Naive thymus-derived CD4-positive, alpha-beta T cell (primary cell): ENCODE measurements at regions of chr16 and their contacts with region 1.

Region 1: DNA sequence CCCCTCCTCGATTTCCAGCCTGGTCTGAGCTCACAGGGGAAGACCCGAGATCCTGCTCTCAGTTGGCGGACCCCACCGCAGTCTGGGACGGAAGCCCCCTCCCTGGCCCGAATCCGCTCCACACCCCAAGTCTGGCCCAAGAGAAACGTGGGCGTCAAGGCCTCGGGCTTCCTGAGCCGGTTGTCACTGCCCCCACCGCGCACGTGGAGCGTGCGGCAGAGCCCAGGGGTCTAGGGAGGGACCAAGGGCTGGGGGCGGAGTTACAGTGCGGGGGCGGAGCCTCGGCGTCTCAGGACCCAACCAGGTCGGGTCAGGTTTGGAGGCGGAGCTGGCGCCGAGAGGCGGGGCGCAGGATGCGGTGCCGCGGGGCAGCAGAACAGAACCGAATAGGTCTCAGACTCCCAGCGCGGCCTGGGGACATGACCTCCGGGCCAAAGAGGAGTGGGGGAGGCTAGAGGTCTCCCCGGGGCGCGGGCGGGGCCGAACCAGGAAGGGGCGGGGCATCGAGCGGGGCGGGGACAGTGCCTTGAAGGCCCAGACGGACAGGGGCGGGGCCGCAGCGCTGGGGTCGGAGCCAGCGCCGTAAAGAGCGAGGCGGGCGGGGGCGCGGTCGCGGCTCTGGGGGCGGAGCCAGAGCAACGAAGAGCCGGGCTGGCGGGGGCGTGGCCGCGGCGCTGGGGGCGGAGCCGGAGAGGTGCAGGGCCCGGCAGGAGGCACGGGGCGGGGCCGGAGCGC is 431 bp upstream of the ZFPM1 start:
- DNase-seq: peak; percentile 95 to 100 (median 98)
- ATAC-seq: peak; percentile 90
- H3K4me3 ChIP-seq: peak overlapping the region; percentile 61
- H3K4me3 Mint-ChIP-seq: peak overlapping the region; percentile 81 to 94 (median 84)
- H3K27ac ChIP-seq: peak overlapping the region; percentile 80
- H3K27ac Mint-ChIP-seq: peak overlapping the region; percentile 67 to 95 (median 87)
- H3K4me1 ChIP-seq: peaks cover 20 to 28% of the 10 kb centered on the region in 2 donors
- H3K4me1 Mint-ChIP-seq: peaks cover 19 to 29% (median 26%) of the 10 kb centered on the region in 7 donors
- H3K27me3 ChIP-seq: no peaks in the 10 kb centered on the region
- H3K27me3 Mint-ChIP-seq: peaks cover 0 to 9% (median 0%) of the 10 kb centered on the region in 5 donors

Region 2: GRCh38 chr16:87387942-87388817 is 1064.5 kb before region 1 on chr16:
- CTCF ChIA-PET with region 1: no interaction called
- POLR2A ChIA-PET with region 1: no interaction called
- intact Hi-C with region 1: loop called (anchors 5 to 10 kb)
- DNase-seq: peak; percentile 46 to 95 (median 88)
- ATAC-seq: peak; percentile 75
- H3K4me3 ChIP-seq: peak overlapping the region; percentile 27
- H3K4me3 Mint-ChIP-seq: peak overlapping the region; percentile 27 to 78 (median 68)
- H3K27ac ChIP-seq: peak overlapping the region; percentile 86
- H3K27ac Mint-ChIP-seq: peak overlapping the region; percentile 87 to 99 (median 96)
- H3K4me1 ChIP-seq: peaks cover 17 to 29% of the 10 kb centered on the region in 2 donors
- H3K4me1 Mint-ChIP-seq: peaks cover 15 to 55% (median 44%) of the 10 kb centered on the region in 7 donors
- H3K27me3 ChIP-seq: no peaks in the 10 kb centered on the region
- H3K27me3 Mint-ChIP-seq: peaks cover 0 to 2% (median 0%) of the 10 kb centered on the region in 5 donors

Region 3: DNA sequence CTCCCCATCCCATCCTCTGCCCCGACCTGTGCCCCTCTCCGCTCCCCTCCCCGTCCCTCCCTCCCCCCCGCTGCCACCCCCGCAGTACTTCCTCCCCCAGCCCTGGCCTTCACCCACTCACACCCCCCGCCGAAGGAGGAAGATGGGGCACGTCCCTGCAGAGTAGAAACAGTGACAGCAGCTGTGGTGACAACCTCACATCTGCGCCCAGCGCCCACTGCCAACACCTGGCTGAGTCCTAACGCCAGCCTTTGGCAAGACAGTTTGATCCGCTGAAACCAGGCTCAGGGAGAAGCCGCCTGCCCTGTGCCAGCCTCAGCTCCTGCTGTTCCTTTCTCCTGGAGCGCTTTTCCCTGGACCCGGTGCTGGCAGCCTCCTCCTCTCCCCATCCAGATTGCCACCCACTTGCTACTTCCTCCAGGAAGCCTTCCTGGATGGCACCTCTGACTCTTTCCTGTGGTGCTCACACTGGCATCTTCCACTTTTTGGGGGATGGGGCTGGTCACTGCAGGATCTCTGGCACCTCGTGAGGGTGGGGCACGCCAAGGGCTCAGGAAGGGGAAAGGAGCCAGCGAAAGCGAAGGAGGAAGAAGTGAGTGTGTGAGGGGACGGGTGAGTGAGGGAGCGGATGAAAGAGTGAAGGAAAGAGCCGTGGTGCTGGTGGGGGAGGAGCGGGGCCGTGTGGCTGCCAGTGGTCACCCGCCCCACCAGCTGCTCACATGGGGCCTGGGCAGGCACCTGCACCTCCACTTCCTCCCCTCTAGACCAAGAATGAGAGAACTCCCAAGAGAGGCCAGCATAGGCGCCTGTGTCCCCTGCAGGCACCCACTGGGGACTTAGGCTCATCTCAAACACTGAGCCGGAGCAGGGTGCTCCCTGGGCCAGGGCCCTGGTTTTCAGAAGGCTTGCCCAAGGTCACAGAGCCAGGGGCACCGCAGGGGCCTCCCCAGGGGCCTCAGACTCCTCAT is 27.4 kb after region 1 on chr16:
- CTCF ChIA-PET with region 1: no interaction called
- POLR2A ChIA-PET with region 1: interaction called, 6 read pairs
- intact Hi-C with region 1: loop called in 1 of 2 experiments (anchors 1 kb)
- DNase-seq: peak in 6 of 9 donors; percentile 35 to 57 (median 51)
- ATAC-seq: peak; percentile 49
- H3K4me3 ChIP-seq: peak overlapping the region; percentile 17
- H3K4me3 Mint-ChIP-seq: peak overlapping the region in 9 of 10 donors; percentile 40 to 77 (median 66)
- H3K27ac ChIP-seq: no peak overlapping the region
- H3K27ac Mint-ChIP-seq: peak overlapping the region in 6 of 9 donors; percentile 28 to 95 (median 74)
- H3K4me1 ChIP-seq: peaks cover 26 to 40% of the 10 kb centered on the region in 2 donors
- H3K4me1 Mint-ChIP-seq: peaks cover 22 to 59% (median 43%) of the 10 kb centered on the region in 7 donors
- H3K27me3 ChIP-seq: no peaks in the 10 kb centered on the region
- H3K27me3 Mint-ChIP-seq: peaks cover 0 to 6% (median 0%) of the 10 kb centered on the region in 5 donors

Region 4: GRCh38 chr16:88569985-88570690 is 117.5 kb after region 1 on chr16 and contains the start of gene ZC3H18:
- CTCF ChIA-PET with region 1: interaction called, 5 read pairs
- POLR2A ChIA-PET with region 1: interaction called, 5 read pairs
- intact Hi-C with region 1: loop called (anchors 1 kb)
- DNase-seq: peak; percentile 93 to 99 (median 96)
- ATAC-seq: peak; percentile 99
- H3K4me3 ChIP-seq: peak within 1 kb of the TSS; percentile 84
- H3K4me3 Mint-ChIP-seq: peak within 1 kb of the TSS; percentile 81 to 93 (median 87)
- H3K27ac ChIP-seq: peak within 1 kb of the TSS; percentile 91
- H3K27ac Mint-ChIP-seq: peak within 1 kb of the TSS; percentile 45 to 93 (median 89)
- H3K4me1 ChIP-seq: peaks cover 21% of the 10 kb centered on the region in 2 donors
- H3K4me1 Mint-ChIP-seq: peaks cover 10 to 39% (median 34%) of the 10 kb centered on the region in 7 donors
- H3K27me3 ChIP-seq: no peaks in the 10 kb centered on the region
- H3K27me3 Mint-ChIP-seq: no peaks in the 10 kb centered on the region
- total RNA-seq, gene ZC3H18: 74.0 to 97.8 (median 82.6) TPM

Region 5: GRCh38 chr16:88700636-88701482 is 248.2 kb after region 1 on chr16:
- CTCF ChIA-PET with region 1: no interaction called
- POLR2A ChIA-PET with region 1: no interaction called
- intact Hi-C with region 1: loop called (anchors 1 to 5 kb)
- DNase-seq: peak; percentile 86 to 96 (median 93)
- ATAC-seq: peak; percentile 91
- H3K4me3 ChIP-seq: peak overlapping the region; percentile 56
- H3K4me3 Mint-ChIP-seq: peak overlapping the region; percentile 78 to 98 (median 94)
- H3K27ac ChIP-seq: peak overlapping the region; percentile 88
- H3K27ac Mint-ChIP-seq: peak overlapping the region; percentile 85 to 98 (median 97)
- H3K4me1 ChIP-seq: peaks cover 32 to 60% of the 10 kb centered on the region in 2 donors
- H3K4me1 Mint-ChIP-seq: peaks cover 36 to 69% (median 47%) of the 10 kb centered on the region in 7 donors
- H3K27me3 ChIP-seq: no peaks in the 10 kb centered on the region
- H3K27me3 Mint-ChIP-seq: no peaks in the 10 kb centered on the region

Region 6: DNA sequence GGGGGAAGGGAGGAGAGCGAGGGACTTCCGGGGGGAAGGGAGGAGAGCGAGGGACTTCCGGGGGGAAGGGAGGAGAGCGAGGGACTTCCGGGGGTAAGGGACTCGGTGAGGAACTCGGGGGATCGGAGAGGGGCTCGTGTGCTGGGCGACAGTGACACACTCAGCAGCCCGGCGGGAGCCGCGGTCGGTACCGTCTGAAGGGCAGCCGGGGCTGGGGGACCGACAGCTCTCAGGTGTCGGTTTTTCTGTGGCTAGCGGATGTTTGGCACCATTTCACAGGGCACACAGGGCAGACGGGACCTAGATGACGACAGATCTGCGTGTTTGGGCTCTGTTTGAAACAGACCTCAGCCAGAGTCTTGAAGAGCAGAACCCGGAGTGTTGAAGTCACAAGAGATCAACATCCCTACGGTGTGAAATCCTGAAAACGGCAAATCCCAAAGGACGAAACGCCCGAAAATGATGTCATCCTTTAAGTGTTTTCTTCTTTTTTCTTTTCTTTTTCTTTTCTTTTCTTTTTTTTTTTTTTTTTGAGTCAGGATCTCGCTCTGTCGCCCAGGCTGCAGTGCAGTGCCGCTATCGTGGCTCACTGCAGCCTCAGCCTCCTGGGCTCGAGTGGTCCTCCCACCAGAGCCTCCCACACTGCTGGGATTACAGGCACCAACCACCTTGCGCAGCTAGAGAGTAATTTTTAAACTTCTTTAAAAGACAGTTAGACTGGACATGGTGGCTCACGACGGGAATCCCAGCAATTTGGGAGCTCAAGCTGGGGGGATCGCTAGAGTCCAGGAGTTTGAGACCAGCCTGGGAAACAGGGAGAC is 788.7 kb after region 1 on chr16:
- CTCF ChIA-PET with region 1: no interaction called
- POLR2A ChIA-PET with region 1: no interaction called
- intact Hi-C with region 1: loop called in 1 of 2 experiments (anchors 10 kb)
- DNase-seq: peak; percentile 75 to 95 (median 93)
- ATAC-seq: peak; percentile 86
- H3K4me3 ChIP-seq: peak overlapping the region; percentile 68
- H3K4me3 Mint-ChIP-seq: peak overlapping the region; percentile 83 to 100 (median 96)
- H3K27ac ChIP-seq: peak overlapping the region; percentile 91
- H3K27ac Mint-ChIP-seq: peak overlapping the region; percentile 94 to 100 (median 99)
- H3K4me1 ChIP-seq: peaks cover 5 to 6% of the 10 kb centered on the region in 2 donors
- H3K4me1 Mint-ChIP-seq: peaks cover 0 to 31% (median 18%) of the 10 kb centered on the region in 7 donors
- H3K27me3 ChIP-seq: no peaks in the 10 kb centered on the region
- H3K27me3 Mint-ChIP-seq: no peaks in the 10 kb centered on the region